Mammary epithelial cell (primary cell): ENCODE measurements at regions of chr15 and their contacts with region 1.

Region 1: DNA sequence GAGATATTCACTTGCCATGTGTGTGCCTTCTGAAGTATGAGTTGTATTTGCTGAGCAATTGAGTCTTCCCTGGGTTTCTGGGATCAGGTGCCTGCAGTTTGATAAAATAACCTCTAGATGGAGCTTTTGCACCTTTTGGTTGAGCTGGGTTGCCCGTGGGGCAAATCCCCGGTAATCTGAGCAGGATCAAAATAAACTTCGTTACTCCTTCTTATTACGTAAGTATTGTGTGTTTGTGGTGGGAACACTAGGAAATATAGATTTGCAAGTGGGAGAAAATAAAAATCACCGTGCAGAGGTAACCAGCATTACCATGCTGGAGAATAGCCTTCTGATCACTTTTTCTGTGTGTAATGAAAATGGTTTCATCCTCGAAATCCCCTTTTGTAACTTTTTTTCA is 277.4 kb upstream of the NR2E3 start:
- DNase-seq: peak; percentile 63
- H3K4me3 ChIP-seq: no peak overlapping the region
- H3K27ac ChIP-seq: no peak overlapping the region
- H3K4me1 ChIP-seq: peaks cover 8% of the 10 kb centered on the region
- H3K27me3 ChIP-seq: no peaks in the 10 kb centered on the region
- CTCF ChIP-seq: peak; percentile 74 to 81

Region 2: GRCh38 chr15:71730277-71731144 is 197.5 kb after region 1 on chr15:
- CTCF ChIA-PET with region 1: no interaction called
- dilution Hi-C with region 1: no loop called
- in situ Hi-C with region 1: no loop called
- intact Hi-C with region 1: loop called (anchors 1 kb)
- DNase-seq: peak; percentile 45
- H3K4me3 ChIP-seq: no peak overlapping the region
- H3K27ac ChIP-seq: no peak overlapping the region
- H3K4me1 ChIP-seq: no peaks in the 10 kb centered on the region
- H3K27me3 ChIP-seq: no peaks in the 10 kb centered on the region
- CTCF ChIP-seq: peak; percentile 75 to 81